ENCODE measurements at regions of chr12 and their contacts with region 1.

Region 1: DNA sequence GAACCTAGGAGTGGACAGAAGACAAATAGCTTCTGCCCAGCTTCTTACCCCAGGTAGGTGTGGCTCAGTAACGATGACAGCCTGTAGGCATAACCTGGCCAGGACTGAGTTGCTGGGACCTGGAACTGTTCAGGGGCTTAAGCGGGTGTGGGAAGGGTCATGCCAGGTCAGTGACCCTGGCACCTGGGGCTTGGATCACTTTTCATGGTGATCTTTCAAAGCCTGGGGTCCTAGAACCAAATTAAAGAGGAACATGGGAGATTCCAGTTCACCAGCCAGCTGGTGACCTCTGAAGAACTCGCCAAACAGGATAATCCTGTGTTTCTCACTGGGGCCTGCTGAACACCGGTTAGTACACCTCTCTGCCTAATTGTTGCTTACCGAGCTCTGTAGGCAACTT is 102.6 kb upstream of the LMNTD1 start:
- DNase-seq: peak; percentile 54 to 67
- H3K4me3 ChIP-seq: no peak overlapping the region
- H3K4me3 Mint-ChIP-seq: no peak overlapping the region
- H3K27ac Mint-ChIP-seq: no peak overlapping the region
- H3K4me1 ChIP-seq: peaks cover 6% of the 10 kb centered on the region
- H3K4me1 Mint-ChIP-seq: no peaks in the 10 kb centered on the region
- H3K27me3 ChIP-seq: no peaks in the 10 kb centered on the region
- H3K27me3 Mint-ChIP-seq: no peaks in the 10 kb centered on the region
- CTCF ChIP-seq: no peak

Region 2: GRCh38 chr12:25670076-25671055 is 14.7 kb after region 1 on chr12:
- CTCF ChIA-PET with region 1: no interaction called
- POLR2A ChIA-PET with region 1: interaction called, 12 read pairs
- intact Hi-C with region 1: no loop called
- DNase-seq: no peak
- H3K4me3 ChIP-seq: no peak overlapping the region
- H3K4me3 Mint-ChIP-seq: no peak overlapping the region
- H3K27ac Mint-ChIP-seq: no peak overlapping the region
- H3K4me1 ChIP-seq: peaks cover 9% of the 10 kb centered on the region
- H3K4me1 Mint-ChIP-seq: no peaks in the 10 kb centered on the region
- H3K27me3 ChIP-seq: no peaks in the 10 kb centered on the region
- H3K27me3 Mint-ChIP-seq: peaks cover 4% of the 10 kb centered on the region
- CTCF ChIP-seq: no peak